ENCODE measurements at regions of chr2 and their contacts with region 1.

Region 1: GRCh38 chr2:231604685-231605606 is 12.3 kb downstream of the TEX44 start:
- DNase-seq: peak; percentile 97 to 100
- H3K4me3 ChIP-seq: peak overlapping the region; percentile 60 to 65
- H3K27ac ChIP-seq: peak overlapping the region; percentile 96 to 98
- H3K4me1 ChIP-seq: peaks cover 7 to 44% of the 10 kb centered on the region in 2 donors
- H3K27me3 ChIP-seq: no peaks in the 10 kb centered on the region
- CTCF ChIP-seq: peak in 1 of 3 experiments; percentile 11

Region 2: GRCh38 chr2:231181860-231182512 is 423.0 kb before region 1 on chr2:
- intact Hi-C with region 1: loop called (anchors 10 kb)
- DNase-seq: peak; percentile 75 to 89
- H3K4me3 ChIP-seq: no peak overlapping the region
- H3K27ac ChIP-seq: peak overlapping the region; percentile 63 to 87
- H3K4me1 ChIP-seq: peaks cover 21 to 37% of the 10 kb centered on the region in 2 donors
- H3K27me3 ChIP-seq: no peaks in the 10 kb centered on the region
- CTCF ChIP-seq: peak in 2 of 3 experiments; percentile 6 to 14

Region 3: DNA sequence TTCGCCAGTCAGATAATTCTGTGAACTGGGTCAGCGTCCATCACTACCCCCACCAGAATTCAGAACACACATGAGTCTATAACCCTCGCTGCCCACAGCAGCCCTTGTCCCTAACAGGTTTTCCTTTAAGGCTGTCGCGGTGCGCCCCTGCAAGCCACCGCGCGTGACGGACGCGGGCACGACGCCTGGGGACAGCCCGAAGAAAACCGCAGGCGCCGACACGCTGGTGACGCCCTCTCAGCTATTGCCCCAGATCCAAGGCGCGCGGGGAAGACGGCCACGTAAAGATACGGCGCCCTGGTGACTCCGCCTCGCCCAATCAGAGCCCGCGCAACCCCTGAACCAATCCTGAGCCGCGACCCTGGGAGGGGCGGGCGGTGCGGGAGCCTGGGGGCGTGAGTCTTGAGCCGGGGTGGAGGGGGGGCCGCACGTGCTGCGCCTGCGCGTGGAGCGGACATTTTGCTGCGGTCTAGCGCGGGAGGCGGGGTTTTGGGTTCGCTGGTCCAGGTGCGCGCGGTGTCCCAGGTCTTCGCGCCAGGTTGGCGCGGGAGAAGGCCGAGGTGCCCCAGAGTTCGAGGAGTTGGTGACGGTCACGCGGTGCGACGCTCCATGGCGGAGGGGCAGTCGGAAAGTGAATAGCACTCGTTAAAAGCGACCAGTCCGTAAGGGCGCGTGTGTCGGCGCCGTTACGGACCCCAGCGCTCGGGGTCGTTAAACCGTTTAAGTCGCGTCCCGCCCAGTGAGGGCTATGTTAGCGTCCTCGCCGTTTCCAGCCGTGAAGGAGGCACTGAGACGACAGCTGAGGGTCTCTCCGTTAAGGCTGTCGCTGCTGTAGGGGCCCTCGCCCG is 90.6 kb before region 1 on chr2:
- intact Hi-C with region 1: loop called (anchors 2 kb)
- DNase-seq: peak; percentile 97 to 99
- H3K4me3 ChIP-seq: peak overlapping the region; percentile 65 to 89
- H3K27ac ChIP-seq: peak overlapping the region; percentile 82 to 84
- H3K4me1 ChIP-seq: peaks cover 0 to 3% of the 10 kb centered on the region in 2 donors
- H3K27me3 ChIP-seq: no peaks in the 10 kb centered on the region
- CTCF ChIP-seq: no peak

Region 4: GRCh38 chr2:231642631-231643494 is 37.9 kb after region 1 on chr2:
- intact Hi-C with region 1: loop called (anchors 2 kb)
- DNase-seq: peak; percentile 86 to 98
- H3K4me3 ChIP-seq: peak overlapping the region; percentile 35 to 49
- H3K27ac ChIP-seq: peak overlapping the region; percentile 97 to 99
- H3K4me1 ChIP-seq: peaks cover 21 to 41% of the 10 kb centered on the region in 2 donors
- H3K27me3 ChIP-seq: no peaks in the 10 kb centered on the region
- CTCF ChIP-seq: no peak

Region 5: DNA sequence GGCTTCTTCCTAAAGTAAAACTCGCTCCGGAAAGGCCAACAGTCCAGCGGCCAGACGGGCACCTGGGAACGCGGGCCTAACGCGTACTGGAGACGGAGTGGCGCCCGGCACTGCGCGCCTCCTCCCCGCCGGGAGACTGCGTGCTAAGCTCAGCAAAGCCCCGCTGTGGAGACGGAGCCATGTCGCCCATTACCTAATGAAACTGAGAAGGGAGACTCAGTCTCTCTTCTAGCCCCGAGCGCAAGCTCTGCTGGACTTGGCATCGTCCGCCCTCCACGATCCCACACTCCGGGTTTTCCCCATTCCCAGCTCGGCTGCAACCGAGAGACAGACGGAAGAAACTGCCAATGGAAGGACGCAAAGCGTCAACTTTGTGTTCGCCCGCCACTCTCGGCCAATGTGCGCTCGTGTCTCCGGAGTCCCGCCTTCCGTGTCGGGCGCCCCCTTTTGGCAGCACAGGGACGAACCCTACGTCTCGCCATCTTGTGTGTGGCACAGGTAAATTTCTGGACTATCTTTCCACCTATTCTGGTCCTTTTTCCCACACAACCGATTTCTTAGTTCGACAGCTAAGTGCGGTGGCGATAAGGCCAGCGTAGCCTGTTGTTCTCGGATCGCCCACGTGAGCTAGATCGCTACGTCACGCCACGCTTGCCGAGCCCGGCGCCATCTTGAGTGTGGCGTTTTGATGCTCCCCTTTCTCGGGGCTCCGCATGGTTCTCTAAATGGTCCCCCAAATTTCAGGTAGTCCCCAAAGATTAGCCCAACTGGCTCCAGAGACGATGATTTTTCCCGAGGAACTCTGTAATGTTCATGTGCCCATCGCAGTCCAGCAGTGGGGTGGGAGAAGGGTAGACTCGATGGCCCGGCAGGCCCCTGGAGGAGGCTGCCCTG is 102.0 kb after region 1 on chr2:
- intact Hi-C with region 1: loop called (anchors 1 kb)
- DNase-seq: peak; percentile 90 to 99
- H3K4me3 ChIP-seq: peak overlapping the region; percentile 52 to 73
- H3K27ac ChIP-seq: peak overlapping the region; percentile 100
- H3K4me1 ChIP-seq: peaks cover 17 to 19% of the 10 kb centered on the region in 2 donors
- H3K27me3 ChIP-seq: no peaks in the 10 kb centered on the region
- CTCF ChIP-seq: peak; percentile 67 to 86 (median 75)

Region 6: DNA sequence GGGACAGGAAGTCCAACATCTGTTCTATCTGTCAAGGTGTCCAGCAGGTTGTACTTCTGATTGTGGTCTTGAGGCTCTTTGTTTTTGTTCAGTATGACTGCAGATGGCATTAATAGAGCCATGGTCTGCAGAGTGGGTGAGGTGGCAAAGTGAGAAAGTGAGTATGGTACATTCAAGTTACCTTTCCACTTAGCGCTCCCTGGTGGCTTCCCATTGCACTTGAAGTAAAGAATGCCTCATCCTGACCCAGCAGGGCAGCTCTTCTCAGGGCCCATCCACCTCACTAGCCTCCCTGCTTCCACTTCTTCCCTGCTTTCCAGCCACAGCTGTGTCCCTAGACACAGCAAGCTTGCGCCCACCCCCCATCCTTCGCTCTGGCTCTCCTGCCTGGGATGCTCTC is 625.6 kb after region 1 on chr2:
- intact Hi-C with region 1: no loop called
- DNase-seq: no peak
- H3K4me3 ChIP-seq: no peak overlapping the region
- H3K27ac ChIP-seq: no peak overlapping the region
- H3K4me1 ChIP-seq: no peaks in the 10 kb centered on the region
- H3K27me3 ChIP-seq: no peaks in the 10 kb centered on the region
- CTCF ChIP-seq: no peak